Naive thymus-derived CD4-positive, alpha-beta T cell (primary cell): ENCODE measurements at regions of chr2 and their contacts with region 1.

Region 1: GRCh38 chr2:65064728-65065552 is 8.7 kb downstream of the CEP68 start:
- DNase-seq: peak in 7 of 9 donors; percentile 43 to 72 (median 56)
- ATAC-seq: peak; percentile 83
- H3K4me3 ChIP-seq: no peak overlapping the region
- H3K4me3 Mint-ChIP-seq: peak overlapping the region in 3 of 10 donors; percentile 3 to 41 (median 6)
- H3K27ac ChIP-seq: no peak overlapping the region
- H3K27ac Mint-ChIP-seq: peak overlapping the region in 6 of 9 donors; percentile 5 to 77 (median 40)
- H3K4me1 ChIP-seq: peaks cover 0 to 25% of the 10 kb centered on the region in 2 donors
- H3K4me1 Mint-ChIP-seq: peaks cover 21 to 65% (median 52%) of the 10 kb centered on the region in 7 donors
- H3K27me3 ChIP-seq: no peaks in the 10 kb centered on the region
- H3K27me3 Mint-ChIP-seq: no peaks in the 10 kb centered on the region

Region 2: GRCh38 chr2:65129826-65130663 is 65.1 kb after region 1 on chr2 and contains the start of gene RAB1A:
- CTCF ChIA-PET with region 1: interaction called, 12 read pairs
- POLR2A ChIA-PET with region 1: interaction called, 5 read pairs
- intact Hi-C with region 1: loop called (anchors 1 to 2 kb)
- DNase-seq: peak; percentile 91 to 99 (median 98)
- ATAC-seq: peak; percentile 94
- H3K4me3 ChIP-seq: peak within 1 kb of the TSS; percentile 78
- H3K4me3 Mint-ChIP-seq: peak within 1 kb of the TSS; percentile 90 to 100 (median 98)
- H3K27ac ChIP-seq: peak within 1 kb of the TSS; percentile 98
- H3K27ac Mint-ChIP-seq: peak within 1 kb of the TSS; percentile 95 to 100 (median 99)
- H3K4me1 ChIP-seq: peaks cover 24 to 25% of the 10 kb centered on the region in 2 donors
- H3K4me1 Mint-ChIP-seq: peaks cover 24 to 47% (median 35%) of the 10 kb centered on the region in 7 donors
- H3K27me3 ChIP-seq: no peaks in the 10 kb centered on the region
- H3K27me3 Mint-ChIP-seq: peaks cover 0 to 17% (median 0%) of the 10 kb centered on the region in 5 donors
- total RNA-seq, gene RAB1A: 48.8 to 78.6 (median 65.8) TPM

Region 3: DNA sequence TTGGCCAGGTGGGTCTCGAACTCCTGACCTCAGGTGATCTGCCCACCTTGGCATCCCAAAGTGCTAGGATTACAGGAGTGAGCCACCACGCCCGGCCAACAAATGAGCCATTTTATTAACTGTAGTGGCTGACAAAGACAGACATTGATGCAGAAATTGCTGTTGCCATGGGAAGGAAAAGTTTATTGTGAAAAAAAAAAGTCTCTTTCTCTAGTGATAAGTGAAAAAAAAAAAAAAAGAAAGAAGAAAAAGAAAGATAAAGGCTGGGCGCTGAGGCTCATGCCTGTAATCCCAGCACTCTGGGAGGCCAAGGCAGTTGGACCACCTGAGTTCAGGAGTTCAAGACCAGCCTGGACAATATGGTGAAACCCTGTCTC is 104.8 kb after region 1 on chr2:
- CTCF ChIA-PET with region 1: interaction called, 9 read pairs
- POLR2A ChIA-PET with region 1: no interaction called
- intact Hi-C with region 1: loop called (anchors 1 kb)
- DNase-seq: no peak
- ATAC-seq: no peak
- H3K4me3 ChIP-seq: no peak overlapping the region
- H3K4me3 Mint-ChIP-seq: no peak overlapping the region
- H3K27ac ChIP-seq: no peak overlapping the region
- H3K27ac Mint-ChIP-seq: no peak overlapping the region
- H3K4me1 ChIP-seq: no peaks in the 10 kb centered on the region
- H3K4me1 Mint-ChIP-seq: peaks cover 0 to 2% (median under 1%) of the 10 kb centered on the region in 7 donors
- H3K27me3 ChIP-seq: no peaks in the 10 kb centered on the region
- H3K27me3 Mint-ChIP-seq: no peaks in the 10 kb centered on the region

Region 4: GRCh38 chr2:65186872-65187851 is 122.2 kb after region 1 on chr2:
- CTCF ChIA-PET with region 1: interaction called, 8 read pairs
- POLR2A ChIA-PET with region 1: no interaction called
- intact Hi-C with region 1: loop called (anchors 1 kb)
- DNase-seq: peak; percentile 23 to 71 (median 57)
- ATAC-seq: peak; percentile 97
- H3K4me3 ChIP-seq: no peak overlapping the region
- H3K4me3 Mint-ChIP-seq: no peak overlapping the region
- H3K27ac ChIP-seq: no peak overlapping the region
- H3K27ac Mint-ChIP-seq: peak overlapping the region in 1 of 9 donors; percentile 3
- H3K4me1 ChIP-seq: no peaks in the 10 kb centered on the region
- H3K4me1 Mint-ChIP-seq: peaks cover 0 to 13% (median 9%) of the 10 kb centered on the region in 7 donors
- H3K27me3 ChIP-seq: peaks cover 0 to 3% of the 10 kb centered on the region in 2 donors
- H3K27me3 Mint-ChIP-seq: peaks cover 4 to 37% (median 12%) of the 10 kb centered on the region in 5 donors

Region 5: DNA sequence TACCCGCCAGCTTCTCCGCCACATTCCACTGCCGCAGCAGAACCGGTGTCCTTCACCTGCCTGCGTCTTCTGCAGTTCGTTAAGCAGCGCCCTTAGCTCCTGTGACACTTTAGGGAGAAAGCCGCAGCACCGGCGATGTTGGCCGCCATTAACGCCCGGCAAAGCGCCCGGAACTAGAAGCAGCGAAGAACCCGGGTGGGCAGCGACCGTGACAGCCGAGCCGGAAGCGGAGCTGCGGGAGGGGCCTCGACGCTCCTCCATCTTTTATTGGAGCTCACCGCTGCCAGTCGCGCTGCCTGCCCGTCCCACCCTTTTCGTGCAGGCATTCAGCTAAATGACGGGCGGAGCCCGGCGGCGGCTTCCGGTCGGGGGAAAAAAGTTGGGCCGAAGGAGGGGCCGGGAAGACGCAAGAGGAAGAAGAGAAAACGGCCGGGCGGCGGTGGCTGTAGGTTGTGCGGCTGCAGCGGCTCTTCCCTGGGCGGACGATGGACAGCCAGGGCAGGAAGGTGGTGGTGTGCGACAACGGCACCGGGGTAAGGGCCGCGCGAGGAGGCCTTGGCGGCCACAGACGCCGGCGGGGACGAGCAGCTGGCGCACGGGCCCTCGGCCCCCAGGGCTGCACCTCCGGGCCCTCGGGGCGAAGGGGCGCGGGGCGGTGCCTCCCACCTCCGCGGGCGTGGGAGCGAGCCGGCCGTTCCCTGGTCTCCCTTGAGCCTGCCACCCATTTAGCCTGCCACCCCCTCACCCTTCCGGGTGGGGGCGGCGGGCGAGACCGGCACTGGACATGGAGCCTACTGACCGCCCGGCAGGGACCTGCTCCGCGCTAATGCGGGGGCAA is 162.7 kb after region 1 on chr2 and contains the start of gene ACTR2:
- CTCF ChIA-PET with region 1: no interaction called
- POLR2A ChIA-PET with region 1: no interaction called
- intact Hi-C with region 1: loop called in 1 of 2 experiments (anchors 2 kb)
- DNase-seq: peak; percentile 86 to 94 (median 93)
- ATAC-seq: peak; percentile 97
- H3K4me3 ChIP-seq: peak within 1 kb of the TSS; percentile 99
- H3K4me3 Mint-ChIP-seq: peak within 1 kb of the TSS; percentile 95 to 100 (median 98)
- H3K27ac ChIP-seq: peak within 1 kb of the TSS; percentile 97
- H3K27ac Mint-ChIP-seq: peak within 1 kb of the TSS; percentile 97 to 99 (median 98)
- H3K4me1 ChIP-seq: peaks cover 25 to 38% of the 10 kb centered on the region in 2 donors
- H3K4me1 Mint-ChIP-seq: peaks cover 24 to 54% (median 44%) of the 10 kb centered on the region in 7 donors
- H3K27me3 ChIP-seq: no peaks in the 10 kb centered on the region
- H3K27me3 Mint-ChIP-seq: no peaks in the 10 kb centered on the region
- total RNA-seq, gene ACTR2: 180 to 435 (median 287) TPM

Region 6: GRCh38 chr2:65479524-65479923 is 414.6 kb after region 1 on chr2:
- CTCF ChIA-PET with region 1: no interaction called
- POLR2A ChIA-PET with region 1: no interaction called
- intact Hi-C with region 1: no loop called
- DNase-seq: no peak
- ATAC-seq: no peak
- H3K4me3 ChIP-seq: no peak overlapping the region
- H3K4me3 Mint-ChIP-seq: no peak overlapping the region
- H3K27ac ChIP-seq: no peak overlapping the region
- H3K27ac Mint-ChIP-seq: no peak overlapping the region
- H3K4me1 ChIP-seq: no peaks in the 10 kb centered on the region
- H3K4me1 Mint-ChIP-seq: no peaks in the 10 kb centered on the region
- H3K27me3 ChIP-seq: no peaks in the 10 kb centered on the region
- H3K27me3 Mint-ChIP-seq: peaks cover 0 to 17% (median 9%) of the 10 kb centered on the region in 5 donors

Region 7: DNA sequence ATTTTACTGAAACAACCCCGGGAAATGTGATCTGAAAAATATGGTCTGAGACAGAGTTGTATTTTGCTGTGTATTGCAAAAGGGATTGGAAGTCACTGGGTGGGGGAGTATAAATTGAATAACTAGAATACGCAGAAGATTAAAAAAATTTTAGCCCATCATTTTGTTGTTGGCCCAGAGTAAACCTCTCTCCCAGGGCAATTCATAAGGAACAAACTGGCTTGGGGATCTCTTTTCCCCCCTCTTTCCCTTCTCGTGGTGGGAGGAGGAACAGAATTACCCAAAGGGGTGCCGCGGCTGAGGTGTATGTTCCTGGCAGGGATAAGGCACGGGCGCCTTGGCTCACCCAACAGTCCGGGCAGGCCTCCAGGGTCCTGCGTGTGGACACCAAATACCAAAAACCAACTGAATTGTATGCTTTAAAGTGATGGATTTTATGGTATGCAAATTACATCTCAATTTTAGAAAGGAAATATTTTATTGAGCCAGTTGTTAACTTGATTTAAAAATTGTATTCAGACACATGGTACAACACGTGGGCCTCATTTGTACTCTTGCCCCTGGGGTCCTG is 488.6 kb after region 1 on chr2:
- CTCF ChIA-PET with region 1: no interaction called
- POLR2A ChIA-PET with region 1: no interaction called
- intact Hi-C with region 1: loop called (anchors 1 kb)
- DNase-seq: no peak
- ATAC-seq: no peak
- H3K4me3 ChIP-seq: no peak overlapping the region
- H3K4me3 Mint-ChIP-seq: no peak overlapping the region
- H3K27ac ChIP-seq: no peak overlapping the region
- H3K27ac Mint-ChIP-seq: no peak overlapping the region
- H3K4me1 ChIP-seq: no peaks in the 10 kb centered on the region
- H3K4me1 Mint-ChIP-seq: peaks cover 0 to 11% (median 5%) of the 10 kb centered on the region in 7 donors
- H3K27me3 ChIP-seq: no peaks in the 10 kb centered on the region
- H3K27me3 Mint-ChIP-seq: peaks cover 0 to 32% (median 6%) of the 10 kb centered on the region in 5 donors

Region 8: DNA sequence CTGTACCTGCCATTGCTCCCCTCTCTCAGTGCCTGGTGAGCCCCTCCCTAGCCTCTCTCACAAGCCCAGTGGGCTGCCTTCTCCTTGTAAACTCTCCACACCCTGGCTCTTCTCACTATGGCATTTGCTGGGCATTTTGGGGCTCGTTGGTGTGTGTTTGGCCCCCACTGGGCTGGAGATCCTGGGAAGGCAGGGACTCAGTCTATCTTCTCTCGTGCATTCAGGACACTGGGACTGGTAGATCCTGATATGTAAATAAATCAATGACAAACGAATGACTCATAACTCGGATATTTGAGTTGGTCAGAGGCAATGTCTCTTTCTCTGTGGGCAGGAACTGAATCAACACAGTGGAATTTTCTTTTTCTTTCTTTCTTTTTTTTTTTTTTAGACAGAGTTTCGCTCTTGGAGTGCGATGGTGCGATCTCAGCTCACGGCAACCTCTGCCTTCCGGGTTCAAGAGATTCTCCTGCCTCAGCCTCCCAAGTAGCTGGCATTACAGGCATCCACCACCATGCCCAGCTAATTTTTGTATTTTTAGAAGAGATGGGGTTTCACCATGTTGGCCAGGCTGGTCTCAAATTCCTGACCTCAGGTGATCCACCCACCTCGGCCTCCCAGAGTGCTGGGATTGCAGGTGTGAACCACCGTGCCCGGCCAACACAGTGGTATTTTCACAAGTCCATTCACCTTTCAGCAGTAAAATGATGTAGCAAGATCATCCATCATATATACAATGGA is 512.1 kb after region 1 on chr2:
- CTCF ChIA-PET with region 1: no interaction called
- POLR2A ChIA-PET with region 1: no interaction called
- intact Hi-C with region 1: loop called (anchors 1 to 2 kb)
- DNase-seq: no peak
- ATAC-seq: no peak
- H3K4me3 ChIP-seq: no peak overlapping the region
- H3K4me3 Mint-ChIP-seq: no peak overlapping the region
- H3K27ac ChIP-seq: no peak overlapping the region
- H3K27ac Mint-ChIP-seq: peak overlapping the region in 1 of 9 donors; percentile 9
- H3K4me1 ChIP-seq: no peaks in the 10 kb centered on the region
- H3K4me1 Mint-ChIP-seq: peaks cover 0 to 5% (median 4%) of the 10 kb centered on the region in 7 donors
- H3K27me3 ChIP-seq: no peaks in the 10 kb centered on the region
- H3K27me3 Mint-ChIP-seq: peaks cover 5 to 16% (median 11%) of the 10 kb centered on the region in 5 donors